ENCODE measurements at regions of chr7 and their contacts with region 1.

Region 1: GRCh38 chr7:518630-519483 is 789 bp downstream of the PDGFA start:
- DNase-seq: peak; percentile 30 to 88
- H3K4me3 ChIP-seq: peak overlapping the region; percentile 77 to 83
- H3K27ac ChIP-seq: peak overlapping the region; percentile 97
- H3K4me1 ChIP-seq: peaks cover 21 to 47% of the 10 kb centered on the region in 2 donors
- H3K27me3 ChIP-seq: no peaks in the 10 kb centered on the region
- CTCF ChIP-seq: no peak

Region 2: GRCh38 chr7:234655-235578 is 283.9 kb before region 1 on chr7:
- intact Hi-C with region 1: loop called (anchors 5 kb)
- DNase-seq: peak in 1 of 2 donors; percentile 83
- H3K4me3 ChIP-seq: peak overlapping the region in 1 of 2 donors; percentile 56
- H3K27ac ChIP-seq: peak overlapping the region; percentile 92 to 95
- H3K4me1 ChIP-seq: peaks cover 34 to 55% of the 10 kb centered on the region in 2 donors
- H3K27me3 ChIP-seq: no peaks in the 10 kb centered on the region
- CTCF ChIP-seq: no peak

Region 3: GRCh38 chr7:542713-543500 is 24.1 kb after region 1 on chr7:
- intact Hi-C with region 1: loop called (anchors 1 kb)
- DNase-seq: peak; percentile 55 to 92
- H3K4me3 ChIP-seq: no peak overlapping the region
- H3K27ac ChIP-seq: peak overlapping the region; percentile 87 to 89
- H3K4me1 ChIP-seq: peaks cover 20 to 30% of the 10 kb centered on the region in 2 donors
- H3K27me3 ChIP-seq: no peaks in the 10 kb centered on the region
- CTCF ChIP-seq: no peak

Region 4: DNA sequence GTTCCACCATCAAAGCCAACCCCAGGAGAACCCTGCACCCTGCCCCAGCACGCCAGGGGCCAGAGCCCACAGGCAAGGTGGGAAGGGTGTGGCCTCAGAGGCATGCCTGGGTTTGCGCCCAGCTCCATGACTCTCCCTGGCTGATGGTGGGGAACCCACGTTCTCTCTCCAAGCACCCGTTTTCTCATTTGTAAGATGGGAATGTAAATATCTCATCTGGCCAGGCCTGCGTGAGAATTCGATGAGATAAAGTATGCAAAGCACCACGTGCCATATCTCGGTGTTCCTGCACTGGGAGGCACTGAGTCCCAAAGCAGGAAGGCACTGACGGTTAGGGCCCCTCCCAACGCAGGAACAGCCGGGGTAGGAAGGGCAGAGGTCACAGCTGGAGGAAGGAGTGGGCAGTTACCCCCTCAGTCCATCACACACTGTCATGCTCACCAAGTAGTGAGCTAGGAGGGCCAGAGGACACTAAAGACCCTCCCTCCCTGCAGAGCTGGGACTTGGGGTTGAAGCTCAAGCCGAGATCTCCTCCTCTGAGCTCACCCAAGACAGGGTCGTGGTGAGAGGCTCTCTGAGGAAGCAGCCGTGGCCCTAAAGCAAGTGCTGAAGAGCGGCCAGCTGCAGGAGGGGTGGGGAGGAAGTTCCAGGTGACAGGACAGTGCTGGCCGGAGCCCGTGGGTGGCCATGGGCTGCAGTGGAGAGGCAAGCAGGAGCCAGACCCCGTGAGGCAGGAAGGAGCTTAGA is 180.4 kb after region 1 on chr7:
- intact Hi-C with region 1: no loop called
- DNase-seq: peak in 1 of 2 donors; percentile 44
- H3K4me3 ChIP-seq: no peak overlapping the region
- H3K27ac ChIP-seq: no peak overlapping the region
- H3K4me1 ChIP-seq: no peaks in the 10 kb centered on the region
- H3K27me3 ChIP-seq: no peaks in the 10 kb centered on the region
- CTCF ChIP-seq: no peak

Region 5: GRCh38 chr7:774161-775109 is 255.6 kb after region 1 on chr7:
- intact Hi-C with region 1: loop called (anchors 10 kb)
- DNase-seq: no peak
- H3K4me3 ChIP-seq: no peak overlapping the region
- H3K27ac ChIP-seq: no peak overlapping the region
- H3K4me1 ChIP-seq: peaks cover 6 to 20% of the 10 kb centered on the region in 2 donors
- H3K27me3 ChIP-seq: no peaks in the 10 kb centered on the region
- CTCF ChIP-seq: peak; percentile 90 to 96 (median 94)

Region 6: GRCh38 chr7:1537535-1538412 is 1018.9 kb after region 1 on chr7:
- intact Hi-C with region 1: loop called (anchors 2 kb)
- DNase-seq: peak; percentile 90 to 99
- H3K4me3 ChIP-seq: peak overlapping the region; percentile 57 to 77
- H3K27ac ChIP-seq: peak overlapping the region; percentile 98 to 99
- H3K4me1 ChIP-seq: peaks cover 17 to 51% of the 10 kb centered on the region in 2 donors
- H3K27me3 ChIP-seq: no peaks in the 10 kb centered on the region
- CTCF ChIP-seq: no peak